CD4-positive, alpha-beta memory T cell (primary cell): ENCODE measurements at regions of chr4 and their contacts with region 1.

Region 1: GRCh38 chr4:46417848-46418247 is 27.9 kb upstream of the GABRA2 start:
- DNase-seq: no peak
- H3K4me3 ChIP-seq: no peak overlapping the region
- H3K4me3 Mint-ChIP-seq: no peak overlapping the region
- H3K27ac ChIP-seq: no peak overlapping the region
- H3K27ac Mint-ChIP-seq: no peak overlapping the region
- H3K4me1 ChIP-seq: no peaks in the 10 kb centered on the region
- H3K4me1 Mint-ChIP-seq: no peaks in the 10 kb centered on the region
- H3K27me3 ChIP-seq: no peaks in the 10 kb centered on the region
- H3K27me3 Mint-ChIP-seq: no peaks in the 10 kb centered on the region

Region 2: GRCh38 chr4:46354701-46355262 is 63.1 kb before region 1 on chr4:
- CTCF ChIA-PET with region 1: no interaction called
- POLR2A ChIA-PET with region 1: no interaction called
- intact Hi-C with region 1: loop called (anchors 10 kb)
- DNase-seq: no peak
- H3K4me3 ChIP-seq: no peak overlapping the region
- H3K4me3 Mint-ChIP-seq: no peak overlapping the region
- H3K27ac ChIP-seq: no peak overlapping the region
- H3K27ac Mint-ChIP-seq: no peak overlapping the region
- H3K4me1 ChIP-seq: no peaks in the 10 kb centered on the region
- H3K4me1 Mint-ChIP-seq: no peaks in the 10 kb centered on the region
- H3K27me3 ChIP-seq: no peaks in the 10 kb centered on the region
- H3K27me3 Mint-ChIP-seq: no peaks in the 10 kb centered on the region

Region 3: DNA sequence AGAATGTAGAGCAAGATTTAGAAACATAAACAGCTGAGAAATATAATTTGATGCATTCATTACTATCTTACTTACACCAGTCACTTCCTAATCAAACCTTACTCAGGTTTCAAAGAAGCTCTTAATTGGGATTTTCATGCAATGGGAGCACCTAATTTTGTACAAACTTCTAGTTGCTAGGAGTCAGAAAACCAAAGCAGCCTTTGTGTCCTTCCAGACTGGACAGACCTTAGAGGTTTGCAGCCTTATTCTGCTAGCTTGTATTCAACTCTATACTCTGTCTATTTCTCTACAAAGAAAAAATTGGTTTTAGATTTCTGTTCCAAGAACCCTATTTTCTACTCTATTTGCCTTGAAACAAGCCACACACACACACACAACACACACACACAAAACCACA is 47.3 kb before region 1 on chr4:
- CTCF ChIA-PET with region 1: no interaction called
- POLR2A ChIA-PET with region 1: no interaction called
- intact Hi-C with region 1: no loop called
- DNase-seq: no peak
- H3K4me3 ChIP-seq: no peak overlapping the region
- H3K4me3 Mint-ChIP-seq: no peak overlapping the region
- H3K27ac ChIP-seq: no peak overlapping the region
- H3K27ac Mint-ChIP-seq: no peak overlapping the region
- H3K4me1 ChIP-seq: no peaks in the 10 kb centered on the region
- H3K4me1 Mint-ChIP-seq: no peaks in the 10 kb centered on the region
- H3K27me3 ChIP-seq: no peaks in the 10 kb centered on the region
- H3K27me3 Mint-ChIP-seq: no peaks in the 10 kb centered on the region